ENCODE measurements at regions of chr3 and their contacts with region 1.

Region 1: DNA sequence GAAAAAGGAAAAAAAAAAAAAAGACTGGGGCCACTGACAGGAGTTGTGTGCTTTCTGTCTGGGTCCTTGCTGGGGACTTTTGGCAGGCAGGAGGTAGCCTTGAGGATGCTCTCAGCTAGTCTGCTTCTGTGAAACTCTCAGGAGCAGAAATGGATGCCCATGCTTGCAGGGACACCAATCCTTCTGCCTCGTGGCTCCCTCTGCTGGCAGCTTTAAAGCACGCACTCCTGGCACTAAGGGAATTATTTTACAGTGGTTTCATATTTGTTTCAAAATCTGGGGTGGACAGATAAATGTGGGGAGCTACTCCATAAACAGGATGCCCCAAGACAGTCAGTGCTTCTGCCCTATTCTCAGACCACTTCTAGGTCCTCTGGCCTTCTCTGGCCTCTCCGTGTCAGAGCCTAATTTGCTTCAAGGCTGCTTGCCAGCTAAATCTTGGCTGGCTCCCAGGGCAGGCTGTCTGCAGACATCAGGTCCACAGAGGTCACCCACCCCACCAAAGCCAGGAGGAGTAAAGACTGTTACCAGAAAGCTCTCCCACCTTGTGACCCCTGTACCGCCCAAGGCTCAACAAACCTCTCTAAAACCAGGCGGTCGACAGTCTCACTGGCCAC is 17.1 kb downstream of the TRAIP start:
- DNase-seq: peak; percentile 72 to 93
- ATAC-seq: peak; percentile 89 to 99 (median 97)
- H3K4me3 ChIP-seq: no peak overlapping the region
- H3K4me3 Mint-ChIP-seq: no peak overlapping the region
- H3K27ac ChIP-seq: no peak overlapping the region
- H3K27ac Mint-ChIP-seq: no peak overlapping the region
- H3K4me1 ChIP-seq: no peaks in the 10 kb centered on the region
- H3K4me1 Mint-ChIP-seq: no peaks in the 10 kb centered on the region
- H3K27me3 ChIP-seq: no peaks in the 10 kb centered on the region
- H3K27me3 Mint-ChIP-seq: no peaks in the 10 kb centered on the region
- CTCF ChIP-seq: peak; percentile 76

Region 2: GRCh38 chr3:49703443-49703927 is 135.8 kb before region 1 on chr3:
- intact Hi-C with region 1: loop called (anchors 1 kb)
- DNase-seq: peak; percentile 51 to 84
- ATAC-seq: peak; percentile 81 to 100 (median 98)
- H3K4me3 ChIP-seq: no peak overlapping the region
- H3K4me3 Mint-ChIP-seq: no peak overlapping the region
- H3K27ac ChIP-seq: no peak overlapping the region
- H3K27ac Mint-ChIP-seq: peak overlapping the region in 1 of 2 donors; percentile 58
- H3K4me1 ChIP-seq: no peaks in the 10 kb centered on the region
- H3K4me1 Mint-ChIP-seq: peaks cover 0 to 7% of the 10 kb centered on the region in 2 donors
- H3K27me3 ChIP-seq: no peaks in the 10 kb centered on the region
- H3K27me3 Mint-ChIP-seq: no peaks in the 10 kb centered on the region
- CTCF ChIP-seq: peak; percentile 83

Region 3: GRCh38 chr3:49906004-49906743 is 66.9 kb after region 1 on chr3:
- intact Hi-C with region 1: loop called (anchors 5 kb)
- DNase-seq: peak; percentile 28 to 72
- ATAC-seq: peak in 2 of 3 donors; percentile 30 to 38
- H3K4me3 ChIP-seq: no peak overlapping the region
- H3K4me3 Mint-ChIP-seq: peak overlapping the region; percentile 21
- H3K27ac ChIP-seq: no peak overlapping the region
- H3K27ac Mint-ChIP-seq: peak overlapping the region in 1 of 2 donors; percentile 71
- H3K4me1 ChIP-seq: peaks cover 36% of the 10 kb centered on the region
- H3K4me1 Mint-ChIP-seq: peaks cover 11 to 26% of the 10 kb centered on the region in 2 donors
- H3K27me3 ChIP-seq: no peaks in the 10 kb centered on the region
- H3K27me3 Mint-ChIP-seq: no peaks in the 10 kb centered on the region
- CTCF ChIP-seq: peak; percentile 47

Region 4: GRCh38 chr3:50600841-50601591 is 761.7 kb after region 1 on chr3:
- intact Hi-C with region 1: no loop called
- DNase-seq: peak; percentile 65 to 80
- ATAC-seq: peak; percentile 87 to 91 (median 89)
- H3K4me3 ChIP-seq: no peak overlapping the region
- H3K4me3 Mint-ChIP-seq: peak overlapping the region; percentile 73
- H3K27ac ChIP-seq: peak overlapping the region; percentile 81
- H3K27ac Mint-ChIP-seq: peak overlapping the region; percentile 93 to 95
- H3K4me1 ChIP-seq: peaks cover 71% of the 10 kb centered on the region
- H3K4me1 Mint-ChIP-seq: peaks cover 59 to 71% of the 10 kb centered on the region in 2 donors
- H3K27me3 ChIP-seq: no peaks in the 10 kb centered on the region
- H3K27me3 Mint-ChIP-seq: no peaks in the 10 kb centered on the region
- CTCF ChIP-seq: no peak